Heart right ventricle (tissue), 16 donors: ENCODE measurements at regions of chr9 and their contacts with region 1.

Region 1: DNA sequence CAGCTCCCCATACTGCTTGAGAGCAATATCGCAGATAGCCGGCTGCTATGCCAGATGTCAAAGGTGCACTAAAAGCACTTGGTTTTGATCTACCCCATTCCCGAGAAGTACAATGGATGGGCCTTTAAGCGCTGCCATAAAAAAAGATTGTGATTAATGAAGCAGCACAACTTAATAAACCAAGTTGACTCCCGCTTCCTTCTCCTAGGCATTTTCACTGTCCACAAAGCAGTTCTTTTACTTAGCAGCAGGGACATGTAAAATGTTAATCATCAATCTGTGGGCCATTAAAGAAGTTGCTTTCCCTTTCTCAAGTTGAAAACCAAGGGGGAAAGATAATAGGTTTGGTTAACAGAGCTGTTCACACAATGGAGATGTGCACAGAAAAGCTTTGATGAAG is 176.4 kb downstream of the TRPM6 start:
- DNase-seq: no peak
- ATAC-seq: no peak
- H3K4me3 ChIP-seq: no peak overlapping the region
- H3K27ac ChIP-seq: no peak overlapping the region
- H3K4me1 ChIP-seq: no peaks in the 10 kb centered on the region
- H3K27me3 ChIP-seq: peaks cover 0 to 4% (median 0%) of the 10 kb centered on the region in 7 donors
- CTCF ChIP-seq: no peak

Region 2: GRCh38 chr9:74666625-74667316 is 44.6 kb before region 1 on chr9:
- intact Hi-C with region 1: loop called in 1 of 10 experiments (anchors 10 kb)
- DNase-seq: no peak
- ATAC-seq: no peak
- H3K4me3 ChIP-seq: no peak overlapping the region
- H3K27ac ChIP-seq: no peak overlapping the region
- H3K4me1 ChIP-seq: no peaks in the 10 kb centered on the region
- H3K27me3 ChIP-seq: no peaks in the 10 kb centered on the region
- CTCF ChIP-seq: no peak

Region 3: GRCh38 chr9:74846771-74847170 is 135.4 kb after region 1 on chr9:
- intact Hi-C with region 1: no loop called
- DNase-seq: no peak
- ATAC-seq: no peak
- H3K4me3 ChIP-seq: no peak overlapping the region
- H3K27ac ChIP-seq: no peak overlapping the region
- H3K4me1 ChIP-seq: no peaks in the 10 kb centered on the region
- H3K27me3 ChIP-seq: no peaks in the 10 kb centered on the region
- CTCF ChIP-seq: no peak